Cardiac septum (tissue), 1 donor: ENCODE measurements at regions of chr2 and their contacts with region 1.

Region 1: GRCh38 chr2:241859436-241860183 is 916 bp upstream of the PDCD1 start:
- DNase-seq: no peak

Region 2: GRCh38 chr2:241810307-241811210 is 49.1 kb before region 1 on chr2:
- intact Hi-C with region 1: loop called (anchors 1 kb)
- DNase-seq: peak; percentile 79

Region 3: GRCh38 chr2:241841181-241842066 is 18.2 kb before region 1 on chr2:
- intact Hi-C with region 1: loop called (anchors 1 kb)
- DNase-seq: peak; percentile 74